Spleen (tissue), 13 donors: ENCODE measurements at regions of chr15 and their contacts with region 1.

Region 1: GRCh38 chr15:55407949-55408791 is at the starts of genes CCPG1 and PIERCE2:
- DNase-seq: peak; percentile 99
- H3K4me3 ChIP-seq: peak within 1 kb of the TSS; percentile 56 to 91 (median 76)
- H3K27ac ChIP-seq: peak within 1 kb of the TSS; percentile 92 to 98 (median 96)
- H3K4me1 ChIP-seq: peaks cover 27 to 59% (median 53%) of the 10 kb centered on the region in 6 donors
- H3K27me3 ChIP-seq: no peaks in the 10 kb centered on the region
- CTCF ChIP-seq: peak; percentile 90 to 100 (median 96)
- POLR2A ChIP-seq: peak in 1 of 3 donors; percentile 91
- total RNA-seq, gene CCPG1: 55.8 to 103 (median 68.6) TPM
- total RNA-seq, gene PIERCE2: 0.97 to 1.4 (median 1.1) TPM in 3 of 7 donors, not detected in the others

Region 2: GRCh38 chr15:55241891-55242290 is 166.3 kb before region 1 on chr15:
- intact Hi-C with region 1: no loop called
- DNase-seq: no peak
- H3K4me3 ChIP-seq: no peak overlapping the region
- H3K27ac ChIP-seq: no peak overlapping the region
- H3K4me1 ChIP-seq: peaks cover 0 to 66% (median 5%) of the 10 kb centered on the region in 6 donors
- H3K27me3 ChIP-seq: no peaks in the 10 kb centered on the region
- CTCF ChIP-seq: no peak
- POLR2A ChIP-seq: no peak

Region 3: DNA sequence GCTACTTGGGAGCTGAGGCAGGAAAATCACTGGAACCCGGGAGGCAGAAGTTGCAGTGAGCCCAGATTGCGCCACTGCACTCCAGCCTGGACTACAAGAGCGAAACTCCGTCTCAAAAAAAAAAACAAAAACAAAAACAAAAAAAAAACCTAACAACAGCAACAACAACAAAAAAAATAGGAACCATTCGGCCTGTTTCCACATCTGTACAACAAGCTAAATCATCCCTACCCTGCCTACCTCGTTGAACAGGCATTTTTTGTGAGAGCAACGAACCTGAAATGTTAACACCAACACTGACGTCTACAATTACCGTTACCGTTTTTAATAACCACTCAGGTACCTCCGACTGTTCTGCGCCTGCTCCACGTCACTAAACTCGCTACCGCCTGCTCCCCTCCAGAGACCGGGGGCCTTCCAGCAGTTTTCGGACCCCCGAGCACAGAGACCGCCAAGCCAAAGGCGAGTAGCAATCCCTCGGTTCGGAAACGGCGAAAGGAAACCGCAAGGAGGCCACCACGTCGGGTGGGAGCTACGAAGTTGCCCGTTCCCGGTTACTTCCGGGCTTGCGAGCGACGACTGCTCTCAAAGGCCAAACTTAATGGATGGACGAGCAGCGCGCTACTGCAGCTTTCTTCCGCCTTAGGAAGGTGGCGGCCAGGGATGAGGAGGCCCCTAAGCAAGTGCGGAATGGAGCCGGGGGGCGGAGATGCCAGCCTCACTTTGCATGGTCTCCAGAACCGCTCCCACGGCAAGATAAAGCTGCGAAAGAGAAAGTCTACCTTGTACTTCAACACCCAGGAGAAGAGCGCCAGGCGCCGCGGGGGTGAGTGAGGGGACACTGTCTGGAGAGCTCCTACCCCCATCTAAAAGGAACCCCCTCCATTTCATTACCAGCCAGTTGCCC is 89.3 kb before region 1 on chr15 and contains the starts of genes PIGB and PIGBOS1:
- intact Hi-C with region 1: loop called (anchors 10 kb)
- DNase-seq: peak; percentile 96
- H3K4me3 ChIP-seq: peak within 1 kb of the TSS; percentile 53 to 87 (median 66)
- H3K27ac ChIP-seq: peak within 1 kb of the TSS; percentile 94 to 98 (median 96)
- H3K4me1 ChIP-seq: peaks cover 29 to 92% (median 69%) of the 10 kb centered on the region in 6 donors
- H3K27me3 ChIP-seq: no peaks in the 10 kb centered on the region
- CTCF ChIP-seq: peak in 4 of 11 experiments; percentile 22 to 44 (median 38)
- POLR2A ChIP-seq: peak in 2 of 3 donors; percentile 20 to 55
- total RNA-seq, gene PIGB: 13.5 to 26.7 (median 24.1) TPM
- total RNA-seq, gene PIGBOS1: 8.9 to 28.4 (median 15.1) TPM

Region 4: DNA sequence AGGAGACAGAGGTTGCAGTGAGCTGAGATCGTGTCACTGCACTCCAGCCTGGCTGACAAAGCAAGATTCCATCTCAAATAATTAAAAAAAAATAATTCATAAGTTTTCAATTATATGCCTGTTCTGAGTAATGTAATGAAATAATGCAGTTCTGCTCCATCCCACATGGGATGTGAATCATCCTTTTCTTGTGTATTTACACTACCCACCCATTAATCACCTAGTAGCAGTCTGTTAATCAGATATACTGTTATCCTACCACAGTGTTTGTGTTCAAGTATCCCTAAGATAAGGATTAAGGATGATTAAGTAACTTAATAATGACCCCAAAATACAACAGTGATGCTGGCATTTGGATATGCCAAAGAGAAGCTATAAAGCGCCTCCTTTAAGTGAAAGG is 50.4 kb before region 1 on chr15:
- intact Hi-C with region 1: no loop called
- DNase-seq: no peak
- H3K4me3 ChIP-seq: no peak overlapping the region
- H3K27ac ChIP-seq: no peak overlapping the region
- H3K4me1 ChIP-seq: peaks cover 0 to 5% (median 0%) of the 10 kb centered on the region in 6 donors
- H3K27me3 ChIP-seq: no peaks in the 10 kb centered on the region
- CTCF ChIP-seq: no peak
- POLR2A ChIP-seq: no peak